Activated naive CD4-positive, alpha-beta T cell treated with anti-CD3 and anti-CD28 coated beads for 36 hours (primary cell): ENCODE measurements at regions of chr1 and their contacts with region 1.

Region 1: DNA sequence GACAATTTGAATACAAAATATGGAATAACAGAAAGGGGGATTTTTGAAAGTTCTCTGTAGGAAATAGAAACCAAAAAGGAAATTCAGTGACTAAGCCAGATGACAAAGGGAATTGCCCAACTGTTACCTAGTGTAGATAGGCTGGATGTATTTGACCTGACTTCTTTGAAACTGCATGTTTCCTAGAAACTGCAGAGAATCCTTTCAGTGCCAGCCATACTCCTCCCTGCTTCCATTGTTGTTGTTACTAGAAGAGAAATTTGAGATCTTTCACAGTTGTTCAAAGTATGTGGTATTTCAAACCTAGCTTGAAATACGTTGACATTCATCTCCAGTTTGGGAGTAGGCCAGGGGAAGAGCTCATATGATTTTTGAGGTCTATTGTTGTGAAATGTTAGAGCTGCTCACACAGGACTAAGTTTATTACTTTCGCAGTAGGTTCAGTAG is 1.8 kb upstream of the GBP5 start:
- DNase-seq: peak; percentile 35
- H3K4me3 Mint-ChIP-seq: peak overlapping the region; percentile 91
- H3K27ac Mint-ChIP-seq: peak overlapping the region; percentile 98
- H3K4me1 Mint-ChIP-seq: peaks cover 57% of the 10 kb centered on the region
- H3K27me3 Mint-ChIP-seq: no peaks in the 10 kb centered on the region

Region 2: DNA sequence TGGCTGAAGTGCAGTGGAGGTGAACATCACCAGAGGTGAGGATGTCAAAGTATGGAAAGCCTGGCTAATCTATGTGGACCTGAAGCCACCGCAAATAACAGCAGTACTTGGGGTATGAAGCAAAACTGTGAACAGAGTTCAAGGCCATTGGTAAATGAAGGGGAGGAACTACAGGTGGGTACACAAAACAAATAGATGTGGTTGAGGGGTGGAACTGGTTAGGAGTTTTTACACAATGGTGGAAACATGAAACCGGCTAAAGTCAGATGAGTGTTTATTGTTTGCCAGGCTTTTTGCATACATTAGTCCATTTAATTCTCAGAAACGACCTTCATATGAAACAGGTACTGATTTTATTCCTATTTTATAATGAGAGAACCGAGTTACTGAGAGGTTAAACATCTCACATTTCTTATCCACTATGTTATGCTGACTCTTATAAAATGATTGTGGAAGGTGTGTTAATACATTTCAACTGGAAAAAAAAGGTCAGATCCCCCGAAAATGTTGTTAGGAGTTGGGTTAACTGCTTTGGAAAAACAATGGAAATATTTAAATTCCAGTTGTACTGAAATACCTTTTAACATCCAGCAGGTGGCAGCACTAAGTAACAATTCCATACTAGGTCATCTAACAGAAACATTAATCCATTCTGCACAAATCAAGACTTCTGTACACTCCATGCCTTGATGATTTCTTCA is 338.8 kb before region 1 on chr1:
- CTCF ChIA-PET with region 1: no interaction called
- intact Hi-C with region 1: loop called (anchors 1 kb)
- DNase-seq: peak; percentile 9
- H3K4me3 Mint-ChIP-seq: no peak overlapping the region
- H3K27ac Mint-ChIP-seq: no peak overlapping the region
- H3K4me1 Mint-ChIP-seq: no peaks in the 10 kb centered on the region
- H3K27me3 Mint-ChIP-seq: no peaks in the 10 kb centered on the region

Region 3: GRCh38 chr1:89022167-89022959 is 252.1 kb before region 1 on chr1 and contains the start of gene GBP3:
- CTCF ChIA-PET with region 1: interaction called, 3 read pairs
- intact Hi-C with region 1: loop called (anchors 1 kb)
- DNase-seq: no peak
- H3K4me3 Mint-ChIP-seq: peak within 1 kb of the TSS; percentile 73
- H3K27ac Mint-ChIP-seq: peak within 1 kb of the TSS; percentile 72
- H3K4me1 Mint-ChIP-seq: peaks cover 51% of the 10 kb centered on the region
- H3K27me3 Mint-ChIP-seq: no peaks in the 10 kb centered on the region
- total RNA-seq, gene GBP3: 1.4 to 1.8 TPM

Region 4: DNA sequence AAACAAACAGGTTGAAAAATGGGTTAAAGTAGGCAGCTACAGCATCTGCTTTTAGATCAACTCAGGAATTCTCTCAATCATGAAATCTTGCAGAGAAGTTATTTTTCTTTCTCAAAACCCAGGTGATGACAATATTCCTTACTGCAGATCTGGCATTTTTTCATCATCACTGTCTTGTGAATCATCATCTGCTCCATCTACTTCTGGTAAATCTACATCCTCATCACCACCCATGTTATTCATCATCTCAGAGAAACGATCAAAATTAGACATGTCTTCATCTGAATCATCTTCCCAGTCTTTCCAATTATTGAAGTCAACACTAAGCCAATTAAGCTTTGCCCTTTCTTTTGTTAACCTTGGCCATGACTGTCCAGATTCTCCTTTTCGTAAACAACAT is 170.3 kb before region 1 on chr1:
- CTCF ChIA-PET with region 1: interaction called, 4 read pairs
- intact Hi-C with region 1: loop called (anchors 1 kb)
- DNase-seq: no peak
- H3K4me3 Mint-ChIP-seq: no peak overlapping the region
- H3K27ac Mint-ChIP-seq: peak overlapping the region; percentile 88
- H3K4me1 Mint-ChIP-seq: peaks cover 41% of the 10 kb centered on the region
- H3K27me3 Mint-ChIP-seq: no peaks in the 10 kb centered on the region

Region 5: GRCh38 chr1:89286549-89287180 is 12.2 kb after region 1 on chr1:
- CTCF ChIA-PET with region 1: interaction called, 6 read pairs
- intact Hi-C with region 1: loop called (anchors 1 kb)
- DNase-seq: no peak
- H3K4me3 Mint-ChIP-seq: no peak overlapping the region
- H3K27ac Mint-ChIP-seq: peak overlapping the region; percentile 52
- H3K4me1 Mint-ChIP-seq: peaks cover 69% of the 10 kb centered on the region
- H3K27me3 Mint-ChIP-seq: no peaks in the 10 kb centered on the region

Region 6: GRCh38 chr1:89454845-89455521 is 180.5 kb after region 1 on chr1:
- CTCF ChIA-PET with region 1: interaction called, 5 read pairs
- intact Hi-C with region 1: loop called (anchors 1 kb)
- DNase-seq: peak; percentile 85
- H3K4me3 Mint-ChIP-seq: no peak overlapping the region
- H3K27ac Mint-ChIP-seq: no peak overlapping the region
- H3K4me1 Mint-ChIP-seq: peaks cover 18% of the 10 kb centered on the region
- H3K27me3 Mint-ChIP-seq: peaks cover 4% of the 10 kb centered on the region

Region 7: DNA sequence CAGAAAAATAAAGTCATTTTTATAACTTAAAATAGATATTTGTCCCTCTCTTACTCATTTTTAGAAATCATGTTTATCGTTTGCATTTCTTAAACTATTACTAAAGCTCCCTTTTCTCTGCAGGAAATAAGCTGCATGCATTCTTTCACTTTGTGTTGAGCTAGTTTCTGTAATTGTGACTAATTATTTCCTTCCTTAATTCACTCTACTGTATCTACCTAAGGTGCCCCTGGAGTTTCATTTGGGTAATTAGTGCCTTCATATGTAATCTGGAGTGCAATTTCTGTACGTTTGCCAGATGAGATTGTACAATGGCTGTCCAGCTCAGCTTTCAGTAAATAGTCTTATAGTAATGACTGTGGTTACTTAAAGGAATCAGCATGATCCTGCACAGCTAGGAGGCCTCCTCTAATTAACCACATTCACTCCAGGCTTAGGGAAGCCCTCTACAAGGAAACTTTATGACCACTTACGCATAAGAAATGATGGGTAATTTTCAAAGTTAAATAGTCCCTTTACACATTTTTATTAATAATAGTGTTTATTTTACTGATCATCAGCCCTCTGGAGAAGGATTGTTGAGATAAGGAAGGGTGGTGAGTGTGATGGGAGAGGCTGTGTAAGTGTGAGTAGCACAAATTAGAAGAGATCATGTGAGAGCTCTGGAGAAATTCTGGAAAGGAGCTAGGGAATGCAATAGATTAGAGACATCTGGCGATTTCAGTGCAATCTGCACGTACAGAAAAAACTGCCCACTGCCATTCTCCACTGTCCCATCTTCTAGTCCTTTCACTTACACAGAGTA is 445.3 kb after region 1 on chr1:
- CTCF ChIA-PET with region 1: no interaction called
- intact Hi-C with region 1: loop called (anchors 1 kb)
- DNase-seq: peak; percentile 28
- H3K4me3 Mint-ChIP-seq: peak overlapping the region; percentile 26
- H3K27ac Mint-ChIP-seq: peak overlapping the region; percentile 95
- H3K4me1 Mint-ChIP-seq: peaks cover 86% of the 10 kb centered on the region
- H3K27me3 Mint-ChIP-seq: no peaks in the 10 kb centered on the region